ENCODE measurements at regions of chr6 and their contacts with region 1.

Region 1: DNA sequence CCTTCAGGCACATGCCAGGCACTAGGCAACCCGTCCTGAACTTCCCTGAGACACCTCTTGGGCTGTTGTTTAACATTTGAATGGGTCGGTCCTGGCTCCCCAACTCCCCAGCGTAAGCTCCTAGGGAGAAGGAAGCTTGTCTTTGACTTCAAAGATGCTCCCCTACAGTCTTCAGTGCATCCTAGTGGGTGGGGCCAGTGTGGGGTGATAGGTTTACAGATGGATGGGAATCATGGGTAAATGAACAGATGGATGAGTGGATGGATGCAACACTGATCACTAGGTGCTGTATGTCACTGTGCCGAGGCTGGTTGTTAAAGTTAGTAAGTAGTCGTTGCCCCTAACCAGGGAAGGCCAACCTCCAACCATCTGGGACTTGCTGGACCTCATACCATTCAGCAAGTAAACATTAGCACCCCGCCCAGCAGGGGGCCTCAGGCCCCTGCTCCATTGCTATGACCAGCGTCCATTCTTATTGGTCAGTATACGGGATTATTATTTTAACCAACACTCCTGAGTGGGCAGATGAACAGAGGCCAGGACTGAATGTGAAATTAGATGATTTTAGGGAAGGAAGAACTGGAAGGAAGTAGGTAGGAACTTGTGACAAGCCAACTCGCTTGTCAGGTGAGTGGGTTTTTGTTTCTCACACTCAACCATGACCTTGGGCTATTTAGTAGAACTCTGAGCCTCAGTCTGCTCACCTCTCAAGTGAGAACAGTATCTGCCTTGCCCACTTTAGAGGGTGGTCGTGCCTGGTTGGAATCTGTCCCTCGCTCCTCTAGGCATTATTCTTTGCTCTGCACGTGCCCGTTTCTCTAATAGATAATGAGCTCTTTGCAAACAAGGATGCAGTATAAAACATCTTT is 82.9 kb upstream of the FOXP4 start:
- H3K4me3 ChIP-seq: no peak overlapping the region
- H3K27ac ChIP-seq: no peak overlapping the region
- H3K4me1 ChIP-seq: no peaks in the 10 kb centered on the region
- CTCF ChIP-seq: peak; percentile 19; the same call in 1 of the 2 replicates

Region 2: DNA sequence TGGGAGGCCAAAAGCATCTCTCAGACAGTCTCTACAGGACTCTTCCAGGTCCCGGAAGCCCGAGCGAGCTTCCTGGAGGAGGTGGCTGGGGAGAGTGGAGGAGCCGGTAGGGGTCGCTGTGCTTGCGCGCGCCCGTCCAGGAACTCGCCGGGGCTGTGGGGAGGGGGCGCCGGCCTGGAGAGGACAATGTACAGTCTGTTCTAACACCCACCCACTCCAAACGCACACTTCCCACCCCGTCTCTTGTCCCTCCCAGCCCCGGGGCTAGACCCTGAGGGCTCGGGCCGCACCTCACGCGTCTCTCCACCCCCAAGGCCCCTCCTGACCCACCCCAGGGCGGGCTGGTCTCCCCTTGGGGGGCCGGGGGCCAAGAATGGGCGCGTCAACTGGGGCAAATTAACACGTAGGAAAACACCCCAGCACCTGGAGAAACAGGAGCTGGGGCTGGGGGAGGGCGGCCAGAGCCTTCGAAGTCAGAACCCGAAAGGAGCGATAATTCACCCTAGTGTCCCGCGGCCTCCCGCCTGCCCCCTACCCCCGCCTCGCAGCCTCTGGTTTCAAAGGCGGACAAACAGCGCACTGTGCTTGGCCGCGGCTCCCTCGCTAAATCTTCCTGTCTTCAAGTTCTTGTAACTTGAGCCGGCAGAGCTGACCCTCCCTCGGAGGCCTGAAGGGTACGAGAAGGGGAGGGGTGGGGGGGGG is 20.3 kb before region 1 on chr6:
- CTCF ChIA-PET with region 1: interaction called, 13 read pairs
- POLR2A ChIA-PET with region 1: interaction called, 4 read pairs
- H3K4me3 ChIP-seq: no peak overlapping the region
- H3K27ac ChIP-seq: peak overlapping the region; percentile 68
- H3K4me1 ChIP-seq: peaks cover 22% of the 10 kb centered on the region
- CTCF ChIP-seq: peak; percentile 80

Region 3: GRCh38 chr6:41483943-41484342 is 20.6 kb after region 1 on chr6:
- CTCF ChIA-PET with region 1: no interaction called
- POLR2A ChIA-PET with region 1: no interaction called
- H3K4me3 ChIP-seq: no peak overlapping the region
- H3K27ac ChIP-seq: no peak overlapping the region
- H3K4me1 ChIP-seq: peaks cover 12% of the 10 kb centered on the region
- CTCF ChIP-seq: no peak

Region 4: DNA sequence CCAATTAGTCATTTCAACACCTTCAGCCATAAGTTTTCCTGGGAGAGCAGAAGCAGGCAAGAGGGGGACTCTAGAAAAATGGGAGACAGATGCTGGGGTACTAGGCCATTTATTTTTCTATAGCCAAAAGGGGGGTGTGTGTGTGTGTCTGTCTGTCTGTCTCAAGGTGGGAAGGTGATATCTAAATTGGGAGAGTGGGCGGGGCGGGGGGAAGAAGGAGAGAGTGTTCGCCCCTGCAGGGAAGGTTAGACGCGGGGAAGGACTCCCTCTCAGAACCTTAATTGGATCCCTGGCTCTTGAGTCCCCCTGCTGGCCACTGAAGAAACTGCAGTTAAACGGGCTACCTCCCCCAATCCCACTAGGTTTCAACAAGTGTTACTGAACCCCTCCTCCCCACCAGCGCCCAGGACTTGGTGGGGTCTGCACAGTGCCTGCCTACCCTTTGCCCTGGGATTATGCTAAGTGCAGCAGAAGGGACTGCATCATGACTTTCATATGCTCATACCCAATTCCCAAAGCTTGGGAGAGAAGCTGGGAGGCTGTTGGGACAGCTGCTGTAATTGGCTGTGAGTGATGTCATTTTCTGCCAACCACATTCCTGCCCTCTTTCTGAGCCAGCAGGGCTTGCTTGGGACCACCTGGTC is 128.7 kb after region 1 on chr6:
- CTCF ChIA-PET with region 1: interaction called, 10 read pairs
- POLR2A ChIA-PET with region 1: no interaction called
- H3K4me3 ChIP-seq: no peak overlapping the region
- H3K27ac ChIP-seq: no peak overlapping the region
- H3K4me1 ChIP-seq: no peaks in the 10 kb centered on the region; the same call in 1 of the 2 replicates
- CTCF ChIP-seq: peak; percentile 83

Region 5: GRCh38 chr6:41787219-41787917 is 324.1 kb after region 1 on chr6 and contains the start of gene TOMM6:
- CTCF ChIA-PET with region 1: no interaction called
- POLR2A ChIA-PET with region 1: no interaction called
- H3K4me3 ChIP-seq: peak within 1 kb of the TSS; percentile 67
- H3K27ac ChIP-seq: peak within 1 kb of the TSS; percentile 67
- H3K4me1 ChIP-seq: no peaks in the 10 kb centered on the region; the same call in 1 of the 2 replicates
- CTCF ChIP-seq: peak; percentile 98

Region 6: DNA sequence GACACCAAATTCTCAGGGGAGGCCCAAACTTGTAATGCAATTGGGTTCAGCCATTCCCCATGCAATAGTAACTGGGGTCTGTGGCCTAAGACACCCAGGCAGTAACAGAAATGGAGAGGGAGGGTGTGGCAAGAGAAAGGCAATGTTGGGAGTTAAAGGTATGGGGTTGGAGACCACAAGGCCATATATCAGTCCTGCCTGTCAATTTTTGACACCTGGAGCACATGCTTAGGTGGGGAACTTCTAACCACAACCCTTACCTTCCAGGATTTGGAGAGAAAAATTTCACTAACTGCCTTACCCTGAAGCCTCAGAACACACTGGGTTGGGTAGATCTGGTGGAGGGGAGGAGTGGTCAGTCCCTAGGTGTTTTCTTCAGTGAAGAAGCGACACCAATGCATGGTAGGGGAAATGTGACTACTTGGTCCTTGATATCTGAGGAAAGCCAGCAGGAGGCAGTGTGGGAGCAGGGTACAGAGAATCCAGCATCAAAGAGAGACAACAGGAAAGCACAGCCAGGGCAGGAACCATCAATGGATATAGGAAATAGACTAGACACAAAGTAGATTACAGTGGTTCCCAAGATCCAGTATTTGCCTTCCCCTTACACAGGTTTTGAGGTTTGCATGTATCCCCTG is 438.7 kb after region 1 on chr6:
- CTCF ChIA-PET with region 1: no interaction called
- POLR2A ChIA-PET with region 1: no interaction called
- H3K4me3 ChIP-seq: no peak overlapping the region
- H3K27ac ChIP-seq: no peak overlapping the region
- H3K4me1 ChIP-seq: no peaks in the 10 kb centered on the region
- CTCF ChIP-seq: no peak

Region 7: GRCh38 chr6:42563697-42564505 is 1100.6 kb after region 1 on chr6 and contains the start of gene UBR2:
- CTCF ChIA-PET with region 1: no interaction called
- POLR2A ChIA-PET with region 1: no interaction called
- H3K4me3 ChIP-seq: peak within 1 kb of the TSS; percentile 82
- H3K27ac ChIP-seq: peak within 1 kb of the TSS; percentile 59
- H3K4me1 ChIP-seq: no peaks in the 10 kb centered on the region
- CTCF ChIP-seq: peak; percentile 96